ENCODE measurements at regions of chr7 and their contacts with region 1.

Region 1: DNA sequence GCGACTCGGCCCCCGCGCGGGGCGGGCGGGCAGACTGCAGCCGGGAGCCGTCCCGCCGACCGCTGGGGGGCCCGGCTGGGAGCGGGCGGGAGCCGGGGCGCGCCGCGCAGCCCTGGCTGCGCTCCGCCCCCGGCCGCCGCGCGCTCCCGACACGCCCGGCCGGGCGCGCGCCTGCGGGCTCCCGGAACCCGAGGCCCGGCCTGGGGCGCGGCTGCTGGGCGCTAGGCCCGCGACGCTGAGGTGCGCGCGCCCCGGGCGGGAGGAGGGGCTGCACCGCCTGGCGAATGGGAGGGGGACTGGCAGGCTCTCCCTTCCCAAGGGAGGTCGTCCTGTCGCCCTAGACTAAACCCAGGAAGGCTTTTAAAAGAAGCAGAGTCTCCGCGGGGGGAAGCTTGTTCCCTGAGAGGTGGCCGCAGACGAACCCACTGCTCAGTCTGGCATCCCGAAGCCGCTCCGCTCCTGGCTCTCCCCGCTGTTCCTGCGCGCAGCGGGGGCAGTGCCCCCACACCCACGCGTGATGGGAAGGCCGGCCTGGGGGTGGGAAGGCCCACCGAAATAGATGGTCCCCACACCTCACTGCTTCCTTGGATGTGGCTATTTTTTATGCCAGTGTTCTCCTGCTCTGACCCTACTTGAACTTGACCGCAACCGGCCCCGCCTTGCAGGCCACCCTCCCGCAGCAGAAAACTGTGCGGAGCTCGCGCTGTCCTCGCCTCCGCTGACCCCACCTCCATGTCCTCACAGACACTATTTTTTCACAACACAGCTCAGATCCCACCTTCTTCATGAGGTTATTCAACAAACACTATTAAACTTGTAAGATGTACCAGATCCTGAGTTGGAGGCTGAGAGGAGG is at the start of gene VOPP1:
- DNase-seq: peak; percentile 50
- H3K4me3 Mint-ChIP-seq: peak within 1 kb of the TSS; percentile 87
- H3K27ac Mint-ChIP-seq: peak within 1 kb of the TSS; percentile 90
- H3K4me1 Mint-ChIP-seq: peaks cover 51% of the 10 kb centered on the region
- H3K27me3 Mint-ChIP-seq: no peaks in the 10 kb centered on the region
- total RNA-seq, gene VOPP1: 53.7 and 56.0 TPM in 2 replicates

Region 2: DNA sequence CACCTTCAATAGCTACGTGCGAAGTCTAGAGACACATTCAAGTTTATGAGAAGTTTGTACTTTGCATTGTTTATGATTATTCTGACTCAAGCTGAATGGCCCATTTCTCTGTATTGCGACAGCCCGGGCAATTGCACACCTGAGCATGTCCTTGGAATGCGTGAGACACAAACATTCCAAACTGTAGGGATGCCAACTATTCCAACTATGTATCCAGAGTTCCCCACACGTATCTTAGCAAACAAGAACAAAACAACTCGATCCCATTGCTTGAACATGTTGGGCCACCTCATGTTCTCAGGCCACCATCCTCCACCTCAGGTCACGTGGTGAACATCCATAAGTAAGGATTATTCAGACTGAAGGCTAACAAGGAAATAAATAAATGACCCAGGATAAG is 605.2 kb before region 1 on chr7:
- intact Hi-C with region 1: no loop called
- DNase-seq: no peak
- H3K4me3 Mint-ChIP-seq: no peak overlapping the region
- H3K27ac Mint-ChIP-seq: no peak overlapping the region
- H3K4me1 Mint-ChIP-seq: no peaks in the 10 kb centered on the region
- H3K27me3 Mint-ChIP-seq: peaks cover 3% of the 10 kb centered on the region

Region 3: DNA sequence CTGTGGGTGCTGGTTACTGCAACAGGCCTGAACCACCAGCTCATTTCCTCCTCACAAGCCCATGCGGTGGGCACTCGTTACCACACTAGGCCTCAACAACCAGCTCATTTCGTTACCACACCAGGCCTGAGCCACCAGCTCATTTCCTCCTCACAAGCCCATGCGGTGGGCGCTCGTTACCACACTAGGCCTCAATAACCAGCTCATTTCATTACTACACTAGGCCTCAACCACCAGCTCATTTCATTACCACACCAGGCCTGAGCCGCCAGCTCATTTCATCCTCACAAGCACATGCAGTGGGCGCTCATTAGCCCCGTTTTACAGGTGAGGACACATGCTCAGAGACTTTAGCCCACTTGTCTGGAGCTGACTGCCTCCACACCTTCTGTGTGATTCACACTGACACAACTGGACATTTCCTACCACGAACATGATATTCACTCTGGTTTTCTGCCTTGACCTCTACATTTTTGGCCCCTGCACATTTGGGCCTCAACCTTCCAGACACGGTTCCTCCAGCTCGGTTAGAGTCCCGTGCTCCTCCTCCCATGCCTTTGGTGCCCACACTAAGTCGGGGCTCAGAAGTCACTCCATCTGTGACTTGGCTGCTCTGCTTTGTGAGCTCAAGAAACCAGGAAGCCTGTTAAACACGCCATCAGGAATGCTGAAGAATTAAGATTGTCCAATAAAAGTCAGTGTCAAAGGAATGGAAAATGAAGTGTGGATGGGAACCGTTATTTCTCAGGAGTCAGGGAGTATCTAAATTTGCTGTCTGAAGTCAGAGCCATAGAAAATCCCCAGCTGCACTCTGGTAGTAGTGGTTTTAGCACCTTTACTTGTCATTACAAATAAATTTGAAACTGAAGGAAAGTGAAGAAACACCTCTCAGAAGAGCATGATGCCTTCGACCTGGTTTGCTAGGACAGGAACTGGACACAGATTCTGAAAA is 263.3 kb before region 1 on chr7:
- intact Hi-C with region 1: loop called (anchors 2 kb)
- DNase-seq: peak; percentile 60
- H3K4me3 Mint-ChIP-seq: no peak overlapping the region
- H3K27ac Mint-ChIP-seq: peak overlapping the region; percentile 60
- H3K4me1 Mint-ChIP-seq: peaks cover 31% of the 10 kb centered on the region
- H3K27me3 Mint-ChIP-seq: peaks cover 11% of the 10 kb centered on the region

Region 4: DNA sequence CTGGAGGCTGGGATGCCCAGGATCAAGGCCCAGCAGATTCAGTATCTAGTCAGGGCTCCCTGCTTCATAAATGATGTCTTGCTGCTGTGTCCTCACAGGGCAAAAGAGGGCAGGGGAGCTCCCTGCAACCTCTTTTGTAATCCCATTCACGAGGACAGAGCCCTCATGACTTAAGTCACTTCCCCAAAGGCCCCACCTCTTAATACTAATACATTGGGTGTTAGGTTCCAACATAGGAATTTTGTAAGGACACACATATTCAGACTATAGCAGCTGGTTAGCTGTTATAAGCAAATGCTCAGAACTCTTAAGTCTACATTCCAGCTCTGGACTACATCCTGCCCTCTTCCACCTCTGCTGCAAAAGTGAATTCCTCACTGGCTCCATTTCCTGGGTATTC is 63.3 kb before region 1 on chr7:
- intact Hi-C with region 1: loop called (anchors 2 kb)
- DNase-seq: no peak
- H3K4me3 Mint-ChIP-seq: no peak overlapping the region
- H3K27ac Mint-ChIP-seq: no peak overlapping the region
- H3K4me1 Mint-ChIP-seq: peaks cover 27% of the 10 kb centered on the region
- H3K27me3 Mint-ChIP-seq: no peaks in the 10 kb centered on the region

Region 5: GRCh38 chr7:55556031-55556430 is 16.6 kb before region 1 on chr7:
- intact Hi-C with region 1: loop called (anchors 1 kb)
- DNase-seq: no peak
- H3K4me3 Mint-ChIP-seq: peak overlapping the region; percentile 20
- H3K27ac Mint-ChIP-seq: peak overlapping the region; percentile 61
- H3K4me1 Mint-ChIP-seq: peaks cover 62% of the 10 kb centered on the region
- H3K27me3 Mint-ChIP-seq: no peaks in the 10 kb centered on the region

Region 6: DNA sequence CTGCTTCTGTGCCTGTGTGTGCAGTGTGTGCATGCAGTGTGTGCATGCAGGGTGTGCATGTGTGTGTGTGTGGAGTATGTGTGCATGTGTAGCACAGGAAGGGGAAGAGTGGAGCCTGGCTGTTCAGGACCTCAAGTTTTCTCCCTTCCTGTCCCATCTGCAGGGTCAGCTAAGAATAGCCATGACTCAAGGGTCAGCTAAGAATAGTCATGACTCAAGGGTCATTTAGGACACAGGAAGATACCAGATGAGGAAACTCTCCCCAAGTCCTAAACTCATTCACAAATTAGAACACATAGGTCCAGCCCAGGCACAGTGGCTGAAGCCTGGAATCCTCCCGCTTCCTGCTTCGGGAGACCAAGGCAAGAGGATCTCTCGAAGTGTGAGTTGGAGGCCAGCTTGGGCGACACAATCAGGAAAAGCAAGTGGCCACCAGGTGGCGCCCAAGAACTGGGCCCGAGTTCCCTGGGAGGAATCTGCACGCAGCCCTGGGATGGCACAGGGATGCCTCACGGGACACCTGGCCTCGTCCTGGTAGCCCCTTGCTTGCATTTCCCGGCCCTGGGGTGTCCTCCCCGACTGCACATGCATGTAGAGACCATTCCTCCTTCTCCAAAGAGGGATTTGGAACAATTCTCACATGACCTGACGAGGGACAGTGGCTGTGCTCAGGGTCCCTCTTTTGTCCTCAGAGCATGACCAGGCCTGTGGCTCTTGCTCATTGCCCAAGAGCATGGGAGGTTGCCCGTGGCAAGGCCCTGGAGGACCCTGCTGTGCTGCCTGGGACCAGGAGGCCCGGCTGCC is 21.1 kb after region 1 on chr7:
- intact Hi-C with region 1: no loop called
- DNase-seq: peak; percentile 42
- H3K4me3 Mint-ChIP-seq: no peak overlapping the region
- H3K27ac Mint-ChIP-seq: no peak overlapping the region
- H3K4me1 Mint-ChIP-seq: no peaks in the 10 kb centered on the region
- H3K27me3 Mint-ChIP-seq: peaks cover 5% of the 10 kb centered on the region

Measured in activated T-helper 2 cell treated with anti-CD3 and anti-CD28 coated beads, Interferon-gamma antibody, Interleukin-2, Interleukin-4, amounts not matched to agents 10 μg/mL and 5 μg/mL and 100 μg/mL, durations not matched to agents 14 hours and 24 hours and 36 hours (primary cell).